ENCODE measurements at regions of chr7 and their contacts with region 1.

Region 1: DNA sequence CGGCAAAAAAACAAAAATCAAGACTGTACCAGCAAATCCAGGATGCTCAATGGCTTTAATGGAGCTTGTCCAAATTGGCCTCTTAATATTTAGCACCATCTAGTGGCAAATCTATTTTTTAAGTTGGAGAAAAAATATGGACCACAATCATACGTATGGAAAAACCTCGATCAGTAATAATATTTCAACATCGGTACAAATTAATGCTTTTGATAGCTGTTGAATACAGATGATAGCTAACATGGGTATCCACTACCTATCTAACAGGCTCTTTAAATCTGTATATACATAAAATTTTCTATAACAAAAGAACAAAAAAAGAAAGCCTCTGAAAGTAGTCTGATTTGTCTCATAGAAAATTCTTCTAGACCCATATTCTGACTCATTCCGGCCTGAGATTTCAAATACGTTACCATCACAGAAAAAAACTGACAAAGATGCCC is 29.2 kb downstream of the COA1 start:
- DNase-seq: no peak
- ATAC-seq: peak; percentile 66
- H3K4me3 ChIP-seq: no peak overlapping the region
- H3K27ac ChIP-seq: no peak overlapping the region
- H3K4me1 ChIP-seq: peaks cover 43% of the 10 kb centered on the region
- H3K27me3 ChIP-seq: no peaks in the 10 kb centered on the region
- CTCF ChIP-seq: peak; percentile 40 to 77 (median 50); a peak in 5 of 6 replicates
- EP300 ChIP-seq: no peak
- POLR2A ChIP-seq: no peak
- RAD21 ChIP-seq: peak; percentile 96

Region 2: GRCh38 chr7:43454936-43455518 is 245.1 kb before region 1 on chr7:
- CTCF ChIA-PET with region 1: interaction called, 24 read pairs
- POLR2A ChIA-PET with region 1: interaction called, 4 read pairs
- RAD21 ChIA-PET with region 1: interaction called, 37 read pairs
- SMC1A ChIA-PET with region 1: interaction called, 25 read pairs
- in situ Hi-C with region 1: loop called (anchors 10 kb)
- intact Hi-C with region 1: no loop called
- DNase-seq: peak; percentile 13
- ATAC-seq: peak; percentile 92
- H3K4me3 ChIP-seq: no peak overlapping the region
- H3K27ac ChIP-seq: no peak overlapping the region
- H3K4me1 ChIP-seq: no peaks in the 10 kb centered on the region
- H3K27me3 ChIP-seq: no peaks in the 10 kb centered on the region; a peak in 2 of 4 replicates
- CTCF ChIP-seq: peak; percentile 44 to 57 (median 45)
- EP300 ChIP-seq: peak in 1 of 2 experiments; percentile 13; a peak in 1 of 4 replicates
- POLR2A ChIP-seq: no peak
- RAD21 ChIP-seq: peak; percentile 50; the same call in 1 of the 2 replicates

Region 3: DNA sequence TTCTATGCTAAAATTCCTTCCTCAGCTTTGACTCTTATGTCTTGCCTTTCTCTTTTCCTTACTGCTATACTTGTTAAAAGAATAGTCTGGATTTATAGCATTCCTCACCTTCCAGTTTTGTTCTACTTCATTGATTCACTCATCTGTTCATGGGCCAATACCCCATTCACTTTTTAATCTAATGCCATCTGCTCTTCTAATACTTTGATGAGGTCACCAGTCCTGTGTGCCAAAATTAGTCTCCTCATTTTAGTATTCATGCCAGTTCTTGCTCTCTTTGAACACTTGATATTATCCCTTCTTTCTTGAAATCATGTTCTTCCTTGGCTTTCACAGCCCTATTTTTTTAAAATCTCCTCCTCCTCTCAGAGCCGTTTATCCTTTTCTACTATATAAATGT is 97.8 kb before region 1 on chr7:
- CTCF ChIA-PET with region 1: interaction called, 6 read pairs
- POLR2A ChIA-PET with region 1: interaction called, 5 read pairs
- RAD21 ChIA-PET with region 1: interaction called, 6 read pairs
- SMC1A ChIA-PET with region 1: interaction called, 13 read pairs
- in situ Hi-C with region 1: no loop called
- intact Hi-C with region 1: no loop called
- DNase-seq: no peak
- ATAC-seq: no peak
- H3K4me3 ChIP-seq: no peak overlapping the region
- H3K27ac ChIP-seq: no peak overlapping the region
- H3K4me1 ChIP-seq: peaks cover 4% of the 10 kb centered on the region; the same call in 1 of the 2 replicates
- H3K27me3 ChIP-seq: no peaks in the 10 kb centered on the region
- CTCF ChIP-seq: no peak
- EP300 ChIP-seq: no peak
- POLR2A ChIP-seq: no peak
- RAD21 ChIP-seq: no peak

Region 4: GRCh38 chr7:43631559-43631958 is 68.5 kb before region 1 on chr7:
- CTCF ChIA-PET with region 1: interaction called, 17 read pairs
- POLR2A ChIA-PET with region 1: no interaction called
- RAD21 ChIA-PET with region 1: interaction called, 16 read pairs
- SMC1A ChIA-PET with region 1: interaction called, 45 read pairs
- in situ Hi-C with region 1: no loop called
- intact Hi-C with region 1: loop called (anchors 5 kb)
- DNase-seq: no peak
- ATAC-seq: peak; percentile 41
- H3K4me3 ChIP-seq: no peak overlapping the region
- H3K27ac ChIP-seq: 0 out of 2 replicates have a peak overlapping the region, but pooled peaks have one; percentile 21
- H3K4me1 ChIP-seq: peaks cover 10% of the 10 kb centered on the region; the same call in 1 of the 2 replicates
- H3K27me3 ChIP-seq: no peaks in the 10 kb centered on the region
- CTCF ChIP-seq: no peak
- EP300 ChIP-seq: no peak
- POLR2A ChIP-seq: no peak
- RAD21 ChIP-seq: no peak

Region 5: DNA sequence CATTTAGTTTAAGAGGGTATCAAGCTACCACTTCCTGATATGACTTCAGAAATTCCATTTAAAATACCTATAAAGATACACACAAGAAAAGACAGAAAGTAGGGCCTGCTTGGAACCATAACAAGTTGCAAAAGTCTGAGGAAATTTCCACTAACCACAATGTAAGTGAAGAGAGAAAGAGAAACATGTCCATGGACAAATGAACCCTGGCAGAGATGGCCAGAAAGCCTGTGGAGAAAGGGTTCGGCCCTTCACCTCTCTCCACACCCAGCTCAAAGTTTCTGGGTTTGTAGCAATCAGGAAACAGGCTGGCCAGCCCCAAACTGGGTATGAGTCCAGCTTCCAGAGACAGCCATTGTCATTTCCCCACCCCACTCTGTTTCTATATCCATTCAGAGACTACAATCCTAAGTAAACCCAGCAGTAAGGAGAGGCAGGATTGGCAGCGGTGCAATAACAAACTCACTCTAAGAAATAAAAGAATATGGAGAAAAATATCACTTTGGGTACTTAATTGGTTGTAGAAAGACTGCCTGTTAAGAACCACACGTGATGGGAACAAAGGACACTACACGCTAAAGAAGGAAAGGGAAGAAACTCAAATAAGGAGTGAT is 46.1 kb before region 1 on chr7:
- CTCF ChIA-PET with region 1: interaction called, 132 read pairs
- POLR2A ChIA-PET with region 1: interaction called, 62 read pairs
- RAD21 ChIA-PET with region 1: interaction called, 132 read pairs
- SMC1A ChIA-PET with region 1: interaction called, 177 read pairs
- in situ Hi-C with region 1: no loop called
- intact Hi-C with region 1: no loop called
- DNase-seq: no peak
- ATAC-seq: no peak
- H3K4me3 ChIP-seq: no peak overlapping the region
- H3K27ac ChIP-seq: no peak overlapping the region
- H3K4me1 ChIP-seq: peaks cover 47% of the 10 kb centered on the region
- H3K27me3 ChIP-seq: no peaks in the 10 kb centered on the region
- CTCF ChIP-seq: no peak
- EP300 ChIP-seq: no peak
- POLR2A ChIP-seq: no peak
- RAD21 ChIP-seq: no peak

Region 6: GRCh38 chr7:43686991-43687390 is 13.1 kb before region 1 on chr7:
- CTCF ChIA-PET with region 1: interaction called, 71 read pairs
- POLR2A ChIA-PET with region 1: interaction called, 5 read pairs
- RAD21 ChIA-PET with region 1: interaction called, 12 read pairs
- SMC1A ChIA-PET with region 1: interaction called, 55 read pairs
- in situ Hi-C with region 1: no loop called
- intact Hi-C with region 1: no loop called
- DNase-seq: no peak
- ATAC-seq: no peak
- H3K4me3 ChIP-seq: no peak overlapping the region
- H3K27ac ChIP-seq: no peak overlapping the region
- H3K4me1 ChIP-seq: peaks cover 9% of the 10 kb centered on the region; the same call in 1 of the 2 replicates
- H3K27me3 ChIP-seq: no peaks in the 10 kb centered on the region
- CTCF ChIP-seq: no peak
- EP300 ChIP-seq: no peak
- POLR2A ChIP-seq: no peak
- RAD21 ChIP-seq: no peak

Region 7: GRCh38 chr7:43742692-43743091 is 42.6 kb after region 1 on chr7:
- CTCF ChIA-PET with region 1: no interaction called
- POLR2A ChIA-PET with region 1: no interaction called
- RAD21 ChIA-PET with region 1: no interaction called
- SMC1A ChIA-PET with region 1: no interaction called
- in situ Hi-C with region 1: no loop called
- intact Hi-C with region 1: no loop called
- DNase-seq: no peak
- ATAC-seq: no peak
- H3K4me3 ChIP-seq: no peak overlapping the region
- H3K27ac ChIP-seq: no peak overlapping the region
- H3K4me1 ChIP-seq: no peaks in the 10 kb centered on the region; the same call in 1 of the 2 replicates
- H3K27me3 ChIP-seq: no peaks in the 10 kb centered on the region
- CTCF ChIP-seq: no peak
- EP300 ChIP-seq: no peak
- POLR2A ChIP-seq: no peak
- RAD21 ChIP-seq: no peak

Region 8: DNA sequence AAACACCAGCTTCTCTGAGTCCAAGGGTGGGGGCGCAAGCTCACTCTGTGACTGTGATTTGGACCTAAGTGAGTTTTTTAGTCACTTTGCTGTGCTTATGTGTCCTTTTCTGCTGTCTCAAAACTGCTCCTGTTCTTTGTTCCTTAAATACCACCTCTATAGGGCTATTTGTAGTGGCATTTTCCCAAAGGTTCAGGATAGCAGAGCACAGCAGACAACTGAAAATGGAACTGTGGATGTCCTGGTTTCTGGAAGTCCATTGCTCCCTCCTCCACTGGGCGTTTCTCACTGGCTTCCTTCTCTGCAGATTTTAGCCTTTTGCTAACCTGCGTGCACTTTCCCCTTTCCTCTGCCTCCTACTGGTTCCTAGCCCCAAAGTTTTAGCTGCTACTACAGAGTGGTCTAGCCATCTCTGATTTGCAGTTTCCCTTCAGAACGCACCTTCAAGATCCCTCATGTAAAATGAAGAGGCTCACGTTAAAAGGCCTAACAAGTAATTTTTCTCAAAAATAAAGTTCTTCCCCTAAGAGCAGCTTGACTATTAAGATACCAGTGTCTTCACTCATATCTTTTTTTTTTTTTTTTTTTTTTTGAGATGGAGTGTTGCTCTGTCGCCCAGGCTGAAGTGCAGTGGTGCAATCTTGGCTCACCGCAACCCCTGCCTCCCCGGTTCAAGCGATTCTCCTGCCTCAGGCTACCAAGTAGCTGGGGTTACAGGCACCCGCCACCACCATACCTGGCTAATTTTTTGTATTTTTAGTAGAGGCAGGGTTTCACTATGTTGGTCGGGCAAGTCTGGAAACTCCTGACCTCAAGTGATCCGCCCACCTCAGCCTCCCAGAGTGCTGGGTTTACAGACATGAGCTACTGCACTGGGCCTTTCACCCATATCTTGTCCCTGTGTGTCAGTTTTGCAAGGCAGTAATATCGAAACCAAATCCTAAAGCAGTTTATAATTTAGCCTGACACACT is 84.2 kb after region 1 on chr7:
- CTCF ChIA-PET with region 1: interaction called, 3 read pairs
- POLR2A ChIA-PET with region 1: no interaction called
- RAD21 ChIA-PET with region 1: interaction called, 12 read pairs
- SMC1A ChIA-PET with region 1: interaction called, 7 read pairs
- in situ Hi-C with region 1: no loop called
- intact Hi-C with region 1: no loop called
- DNase-seq: peak; percentile 82
- ATAC-seq: peak; percentile 97
- H3K4me3 ChIP-seq: peak overlapping the region; percentile 47
- H3K27ac ChIP-seq: peak overlapping the region; percentile 56
- H3K4me1 ChIP-seq: peaks cover 16% of the 10 kb centered on the region
- H3K27me3 ChIP-seq: no peaks in the 10 kb centered on the region
- CTCF ChIP-seq: no peak; a peak in 1 of 6 replicates
- EP300 ChIP-seq: no peak
- POLR2A ChIP-seq: no peak
- RAD21 ChIP-seq: no peak

Region 9: DNA sequence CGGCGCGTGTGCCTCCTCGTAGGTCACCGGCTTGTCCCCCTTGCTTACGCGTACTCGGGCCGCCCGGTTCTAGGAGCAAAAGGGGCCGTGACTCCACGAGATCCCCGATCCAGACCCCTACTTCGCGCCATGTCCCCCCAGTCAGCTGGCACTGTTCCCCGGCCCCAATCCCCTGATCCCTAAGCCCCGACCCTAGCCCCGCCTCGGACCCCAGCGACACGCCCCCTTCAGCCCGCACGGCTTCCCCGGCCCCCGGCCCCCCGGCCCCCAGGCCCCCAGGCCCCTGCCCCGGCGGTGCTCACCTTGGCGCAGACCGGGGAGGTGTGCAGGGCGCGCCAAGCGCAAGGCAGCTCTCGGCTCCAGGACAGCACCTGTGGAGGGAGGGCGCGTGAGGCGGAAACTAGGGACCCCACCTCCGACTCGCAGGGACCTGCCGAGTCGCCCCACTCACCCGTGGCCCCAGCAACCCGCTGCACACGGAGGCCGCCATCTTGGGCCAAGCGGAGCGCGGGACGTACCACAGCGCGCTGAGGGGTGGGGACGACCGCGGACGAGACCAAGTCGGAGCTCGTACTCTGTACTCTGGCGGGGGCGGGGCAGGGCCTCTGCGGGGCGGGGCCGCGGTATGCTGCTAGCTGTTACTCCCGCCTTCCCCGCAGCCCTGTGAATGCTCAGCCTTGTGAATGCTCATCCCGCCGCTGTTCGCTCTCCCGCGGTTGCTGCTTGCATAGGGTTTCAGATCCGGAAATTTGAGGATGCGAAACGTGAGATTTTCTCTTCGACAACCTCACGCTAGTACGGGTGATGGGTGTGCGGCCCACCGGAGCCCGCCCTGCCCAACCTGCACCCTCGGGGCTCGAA is 169.2 kb after region 1 on chr7 and contains the start of gene MRPS24:
- CTCF ChIA-PET with region 1: no interaction called
- POLR2A ChIA-PET with region 1: no interaction called
- RAD21 ChIA-PET with region 1: no interaction called
- SMC1A ChIA-PET with region 1: no interaction called
- in situ Hi-C with region 1: no loop called
- intact Hi-C with region 1: no loop called
- DNase-seq: peak; percentile 70
- ATAC-seq: peak; percentile 98
- H3K4me3 ChIP-seq: peak within 1 kb of the TSS; percentile 92
- H3K27ac ChIP-seq: peak within 1 kb of the TSS; percentile 52
- H3K4me1 ChIP-seq: peaks cover 7% of the 10 kb centered on the region
- H3K27me3 ChIP-seq: no peaks in the 10 kb centered on the region
- CTCF ChIP-seq: no peak
- EP300 ChIP-seq: no peak
- POLR2A ChIP-seq: peak; percentile 98
- RAD21 ChIP-seq: no peak
- polyA plus RNA-seq, gene MRPS24: 27.6 to 97.4 TPM

Measured in GM12878 (cell line).